ENCODE measurements at regions of chr11 and their contacts with region 1.

Region 1: DNA sequence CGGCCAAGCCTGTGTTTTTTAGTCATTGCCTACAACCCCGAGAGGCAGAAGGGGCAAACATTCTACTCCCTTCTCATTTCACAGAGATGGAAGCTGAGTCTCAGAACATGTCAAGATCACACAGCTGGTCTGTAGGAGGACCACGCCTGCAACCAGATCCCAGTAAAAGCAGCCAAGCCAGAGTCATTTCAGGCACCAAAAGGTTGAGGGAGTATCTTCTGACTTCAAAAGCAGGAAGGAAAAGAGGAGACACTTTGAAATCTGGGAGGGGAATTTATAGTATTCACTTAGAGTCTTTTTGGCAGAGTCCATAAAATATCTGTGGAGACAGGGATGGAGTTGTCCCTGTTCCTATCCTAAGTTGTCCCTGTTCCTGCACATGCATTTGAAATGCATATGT is 17.9 kb upstream of the ZDHHC13 start:
- DNase-seq: no peak
- ATAC-seq: no peak
- H3K4me3 ChIP-seq: no peak overlapping the region
- H3K4me3 Mint-ChIP-seq: no peak overlapping the region
- H3K27ac ChIP-seq: no peak overlapping the region
- H3K27ac Mint-ChIP-seq: no peak overlapping the region
- H3K4me1 ChIP-seq: no peaks in the 10 kb centered on the region
- H3K4me1 Mint-ChIP-seq: no peaks in the 10 kb centered on the region
- H3K27me3 ChIP-seq: no peaks in the 10 kb centered on the region
- H3K27me3 Mint-ChIP-seq: peaks cover 13 to 45% (median 27%) of the 10 kb centered on the region in 5 donors

Region 2: GRCh38 chr11:17707830-17708229 is 1391.3 kb before region 1 on chr11:
- CTCF ChIA-PET with region 1: no interaction called
- POLR2A ChIA-PET with region 1: no interaction called
- intact Hi-C with region 1: loop called in 1 of 2 experiments (anchors 5 kb)
- DNase-seq: no peak
- ATAC-seq: no peak
- H3K4me3 ChIP-seq: no peak overlapping the region
- H3K4me3 Mint-ChIP-seq: no peak overlapping the region
- H3K27ac ChIP-seq: no peak overlapping the region
- H3K27ac Mint-ChIP-seq: no peak overlapping the region
- H3K4me1 ChIP-seq: no peaks in the 10 kb centered on the region
- H3K4me1 Mint-ChIP-seq: peaks cover 0 to 1% (median 0%) of the 10 kb centered on the region in 7 donors
- H3K27me3 ChIP-seq: no peaks in the 10 kb centered on the region
- H3K27me3 Mint-ChIP-seq: peaks cover 12 to 39% (median 17%) of the 10 kb centered on the region in 5 donors

Region 3: GRCh38 chr11:19164230-19164855 is 65.2 kb after region 1 on chr11:
- CTCF ChIA-PET with region 1: no interaction called
- POLR2A ChIA-PET with region 1: no interaction called
- intact Hi-C with region 1: no loop called
- DNase-seq: no peak
- ATAC-seq: no peak
- H3K4me3 ChIP-seq: no peak overlapping the region
- H3K4me3 Mint-ChIP-seq: no peak overlapping the region
- H3K27ac ChIP-seq: no peak overlapping the region
- H3K27ac Mint-ChIP-seq: no peak overlapping the region
- H3K4me1 ChIP-seq: no peaks in the 10 kb centered on the region
- H3K4me1 Mint-ChIP-seq: peaks cover 0 to 18% (median 0%) of the 10 kb centered on the region in 7 donors
- H3K27me3 ChIP-seq: no peaks in the 10 kb centered on the region
- H3K27me3 Mint-ChIP-seq: no peaks in the 10 kb centered on the region